K562 (cell line): ENCODE measurements at regions of chr3 and their contacts with region 1.

Region 1: GRCh38 chr3:52123106-52123725 is 31.0 kb downstream of the POC1A start:
- DNase-seq: peak; percentile 73 to 82 (median 78)
- ATAC-seq: peak; percentile 95
- H3K4me3 ChIP-seq: no peak overlapping the region
- H3K27ac ChIP-seq: no peak overlapping the region
- H3K4me1 ChIP-seq: peaks cover 6 to 13% of the 10 kb centered on the region in 2 experiments; a peak in 4 of 5 replicates
- H3K27me3 ChIP-seq: no peaks in the 10 kb centered on the region
- CTCF ChIP-seq: peak; percentile 86 to 94 (median 86)
- EP300 ChIP-seq: no peak
- POLR2A ChIP-seq: no peak
- RAD21 ChIP-seq: peak; percentile 71 to 82

Region 2: DNA sequence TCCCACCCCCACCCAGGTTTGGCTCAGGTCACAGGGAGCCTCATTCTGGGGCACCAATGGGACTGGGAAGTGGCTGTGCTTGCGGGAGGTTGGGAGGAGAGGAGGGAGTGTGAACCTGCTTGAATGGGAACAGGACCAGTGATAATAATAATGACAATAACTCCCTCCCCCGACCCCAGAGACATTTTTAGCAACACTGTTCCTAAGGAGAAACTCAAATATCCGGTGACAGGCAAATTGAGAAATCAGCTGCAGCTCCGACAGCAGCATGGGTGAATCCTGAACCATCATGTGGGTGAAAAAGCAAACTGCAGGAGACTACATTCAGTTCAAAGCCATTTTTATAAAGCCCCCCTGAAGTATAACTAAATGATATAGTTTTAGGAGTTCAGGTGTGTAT is 115.9 kb before region 1 on chr3:
- CTCF ChIA-PET with region 1: interaction called, 4 read pairs
- POLR2A ChIA-PET with region 1: interaction called, 3 read pairs
- in situ Hi-C with region 1: loop called (anchors 5 kb)
- intact Hi-C with region 1: loop called (anchors 1 kb)
- DNase-seq: no peak
- ATAC-seq: no peak
- H3K4me3 ChIP-seq: no peak overlapping the region
- H3K27ac ChIP-seq: no peak overlapping the region
- H3K4me1 ChIP-seq: peaks cover 17 to 28% of the 10 kb centered on the region in 2 experiments; a peak in 4 of 5 replicates
- H3K27me3 ChIP-seq: no peaks in the 10 kb centered on the region
- CTCF ChIP-seq: no peak
- EP300 ChIP-seq: no peak
- POLR2A ChIP-seq: no peak
- RAD21 ChIP-seq: no peak

Region 3: GRCh38 chr3:52056968-52057805 is 66.0 kb before region 1 on chr3:
- CTCF ChIA-PET with region 1: interaction called, 4 read pairs
- POLR2A ChIA-PET with region 1: no interaction called
- in situ Hi-C with region 1: no loop called
- intact Hi-C with region 1: loop called (anchors 2 kb)
- DNase-seq: peak; percentile 93 to 98 (median 96)
- ATAC-seq: peak; percentile 91
- H3K4me3 ChIP-seq: peak overlapping the region; percentile 61
- H3K27ac ChIP-seq: peak overlapping the region; percentile 68
- H3K4me1 ChIP-seq: peaks cover 17 to 52% of the 10 kb centered on the region in 2 experiments; a peak in 4 of 5 replicates
- H3K27me3 ChIP-seq: no peaks in the 10 kb centered on the region
- CTCF ChIP-seq: 0 out of 6 replicates have a peak, but pooled peaks of 1 of the 3 experiments have one; percentile 11
- EP300 ChIP-seq: no peak
- POLR2A ChIP-seq: 0 out of 2 replicates have a peak, but pooled peaks have one; percentile 40
- RAD21 ChIP-seq: no peak; a peak in 1 of 4 replicates